MCF 10A (cell line): ENCODE measurements at regions of chr20 and their contacts with region 1.

Region 1: GRCh38 chr20:23574977-23575376 is 6.7 kb upstream of the CST9L start:
- DNase-seq: no peak
- H3K4me3 Mint-ChIP-seq: no peak overlapping the region
- H3K27ac Mint-ChIP-seq: no peak overlapping the region
- H3K4me1 Mint-ChIP-seq: no peaks in the 10 kb centered on the region
- H3K27me3 Mint-ChIP-seq: no peaks in the 10 kb centered on the region
- CTCF ChIP-seq: no peak

Region 2: GRCh38 chr20:23541330-23541729 is 33.6 kb before region 1 on chr20:
- CTCF ChIA-PET with region 1: no interaction called
- POLR2A ChIA-PET with region 1: no interaction called
- intact Hi-C with region 1: loop called (anchors 5 kb)
- DNase-seq: peak; percentile 52
- H3K4me3 Mint-ChIP-seq: no peak overlapping the region
- H3K27ac Mint-ChIP-seq: no peak overlapping the region
- H3K4me1 Mint-ChIP-seq: peaks cover 14% of the 10 kb centered on the region
- H3K27me3 Mint-ChIP-seq: no peaks in the 10 kb centered on the region
- CTCF ChIP-seq: no peak

Region 3: DNA sequence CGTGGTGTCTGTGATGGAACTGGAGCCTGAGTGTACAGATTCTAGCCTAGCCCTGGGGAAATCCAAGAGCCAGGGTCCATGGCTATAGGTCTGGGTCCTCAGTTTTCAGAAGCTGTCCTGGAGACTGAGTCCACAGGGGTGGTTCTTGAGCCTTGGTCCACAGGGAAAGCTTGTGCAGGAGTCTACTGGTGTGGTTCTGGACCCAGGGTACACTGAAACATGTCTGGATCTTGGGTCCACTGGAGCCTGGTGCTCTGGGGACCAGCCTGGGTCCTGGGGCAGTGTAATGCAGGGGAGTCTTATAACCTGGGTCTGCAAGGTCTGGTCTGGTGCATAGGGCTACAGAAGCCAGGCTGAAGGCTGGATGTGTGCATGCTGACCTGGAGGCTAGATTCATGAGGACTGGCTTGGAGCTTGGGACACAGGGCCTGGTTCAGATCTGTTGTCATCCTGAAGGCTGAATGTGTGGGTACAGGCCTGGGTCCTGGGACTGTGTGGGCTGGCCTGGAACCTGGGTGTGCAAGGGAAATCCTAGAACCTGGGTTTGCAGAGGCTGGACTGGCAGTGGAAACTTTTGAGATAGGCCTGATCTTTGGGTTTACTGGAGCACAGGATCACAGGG is 12.1 kb before region 1 on chr20:
- CTCF ChIA-PET with region 1: no interaction called
- POLR2A ChIA-PET with region 1: no interaction called
- intact Hi-C with region 1: no loop called
- DNase-seq: no peak
- H3K4me3 Mint-ChIP-seq: no peak overlapping the region
- H3K27ac Mint-ChIP-seq: no peak overlapping the region
- H3K4me1 Mint-ChIP-seq: no peaks in the 10 kb centered on the region
- H3K27me3 Mint-ChIP-seq: peaks cover 2% of the 10 kb centered on the region
- CTCF ChIP-seq: no peak